Breast epithelium (tissue), 4 donors: ENCODE measurements at regions of chr16 and their contacts with region 1.

Region 1: DNA sequence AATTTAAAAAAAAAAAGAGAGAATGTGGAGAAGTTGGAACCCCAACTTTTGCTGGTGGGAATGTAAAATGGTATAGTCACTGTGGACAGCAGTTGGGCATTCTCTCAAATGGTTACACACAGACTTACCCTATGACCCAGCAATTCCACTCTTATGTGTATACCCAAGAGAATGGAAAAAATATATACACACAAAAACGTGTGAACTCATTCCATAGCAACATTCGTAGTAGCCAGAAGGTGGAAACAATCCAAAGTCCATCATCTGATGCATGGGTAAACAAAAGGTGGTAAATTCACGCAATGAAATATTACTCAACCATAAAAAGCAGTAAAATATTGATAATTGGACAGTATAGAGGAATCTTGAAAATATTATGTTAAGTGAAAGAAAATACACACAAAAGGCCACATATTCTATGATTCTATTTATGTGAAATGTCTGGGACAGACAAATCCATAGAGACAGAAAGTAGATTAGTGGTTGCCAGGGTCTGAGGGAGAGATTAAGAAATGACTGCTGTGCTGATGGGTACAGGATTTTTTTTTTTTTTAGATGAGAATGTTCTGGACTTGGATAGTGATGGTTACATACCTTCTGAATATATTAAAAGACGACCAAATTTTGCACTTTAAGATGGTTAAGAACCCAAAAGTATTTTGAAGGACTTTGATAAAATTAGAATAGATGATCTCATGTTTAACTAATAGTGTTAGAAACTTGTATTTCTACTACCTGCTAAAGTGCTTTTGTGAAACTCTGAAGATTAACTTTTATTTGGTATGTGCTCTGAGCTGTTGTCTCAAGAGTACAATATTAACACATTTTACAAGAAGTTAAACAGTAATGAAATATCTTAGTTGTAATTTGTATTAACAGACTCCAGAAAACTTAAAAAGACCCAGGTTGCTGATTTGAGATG is 60.9 kb downstream of the MRTFB start:
- DNase-seq: no peak
- H3K4me3 ChIP-seq: no peak overlapping the region
- H3K27ac ChIP-seq: no peak overlapping the region
- H3K4me1 ChIP-seq: no peaks in the 10 kb centered on the region
- H3K27me3 ChIP-seq: no peaks in the 10 kb centered on the region
- CTCF ChIP-seq: no peak
- POLR2A ChIP-seq: no peak

Region 2: DNA sequence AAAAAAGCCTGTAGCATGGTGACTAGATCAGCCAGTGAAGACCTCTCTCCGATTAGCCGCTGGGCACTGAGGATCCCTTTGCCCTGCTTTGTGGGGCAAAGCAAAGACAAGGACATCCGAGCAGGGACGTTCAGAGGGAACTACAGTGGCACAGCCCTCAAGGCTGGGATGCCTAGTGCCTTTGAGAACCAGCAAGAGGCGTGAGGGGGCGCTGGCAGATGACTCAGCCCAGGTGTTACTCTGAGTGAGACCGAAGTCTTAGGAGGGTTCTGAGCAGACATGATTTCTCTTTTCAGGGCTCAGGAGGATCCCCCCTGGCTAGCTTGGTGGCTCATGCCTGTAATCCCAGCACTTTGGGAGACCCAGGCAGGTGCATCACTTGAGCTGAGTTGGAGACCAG is 1507.0 kb before region 1 on chr16:
- intact Hi-C with region 1: no loop called
- DNase-seq: no peak
- H3K4me3 ChIP-seq: no peak overlapping the region
- H3K27ac ChIP-seq: no peak overlapping the region
- H3K4me1 ChIP-seq: no peaks in the 10 kb centered on the region
- H3K27me3 ChIP-seq: peaks cover 0 to 11% of the 10 kb centered on the region in 2 donors
- CTCF ChIP-seq: no peak
- POLR2A ChIP-seq: no peak

Region 3: GRCh38 chr16:14077918-14078317 is 54.1 kb before region 1 on chr16:
- intact Hi-C with region 1: loop called (anchors 2 kb)
- DNase-seq: no peak
- H3K4me3 ChIP-seq: no peak overlapping the region
- H3K27ac ChIP-seq: no peak overlapping the region
- H3K4me1 ChIP-seq: no peaks in the 10 kb centered on the region
- H3K27me3 ChIP-seq: no peaks in the 10 kb centered on the region
- CTCF ChIP-seq: no peak
- POLR2A ChIP-seq: no peak

Region 4: DNA sequence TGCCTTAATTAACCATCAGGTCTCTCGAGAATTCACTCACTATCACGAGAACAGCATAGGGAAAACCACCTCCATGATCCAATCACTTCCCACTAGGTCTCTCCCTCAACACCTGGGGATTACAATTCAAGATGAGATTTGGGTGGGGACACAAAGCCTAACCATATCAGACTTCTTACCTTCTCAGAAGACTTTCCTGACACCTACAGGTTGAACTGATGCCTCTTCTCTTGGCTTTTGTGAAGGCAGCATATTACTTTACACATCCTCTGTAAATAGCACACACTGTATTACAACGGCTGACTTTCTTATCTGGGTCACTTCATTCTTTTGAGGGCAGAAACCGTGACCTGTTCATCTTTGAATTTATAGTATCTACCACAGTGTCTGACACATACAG is 1325.9 kb after region 1 on chr16:
- intact Hi-C with region 1: no loop called
- DNase-seq: no peak
- H3K4me3 ChIP-seq: no peak overlapping the region
- H3K27ac ChIP-seq: no peak overlapping the region
- H3K4me1 ChIP-seq: no peaks in the 10 kb centered on the region
- H3K27me3 ChIP-seq: no peaks in the 10 kb centered on the region
- CTCF ChIP-seq: no peak
- POLR2A ChIP-seq: no peak